HepG2 (cell line): ENCODE measurements at regions of chr21 and their contacts with region 1.

Region 1: DNA sequence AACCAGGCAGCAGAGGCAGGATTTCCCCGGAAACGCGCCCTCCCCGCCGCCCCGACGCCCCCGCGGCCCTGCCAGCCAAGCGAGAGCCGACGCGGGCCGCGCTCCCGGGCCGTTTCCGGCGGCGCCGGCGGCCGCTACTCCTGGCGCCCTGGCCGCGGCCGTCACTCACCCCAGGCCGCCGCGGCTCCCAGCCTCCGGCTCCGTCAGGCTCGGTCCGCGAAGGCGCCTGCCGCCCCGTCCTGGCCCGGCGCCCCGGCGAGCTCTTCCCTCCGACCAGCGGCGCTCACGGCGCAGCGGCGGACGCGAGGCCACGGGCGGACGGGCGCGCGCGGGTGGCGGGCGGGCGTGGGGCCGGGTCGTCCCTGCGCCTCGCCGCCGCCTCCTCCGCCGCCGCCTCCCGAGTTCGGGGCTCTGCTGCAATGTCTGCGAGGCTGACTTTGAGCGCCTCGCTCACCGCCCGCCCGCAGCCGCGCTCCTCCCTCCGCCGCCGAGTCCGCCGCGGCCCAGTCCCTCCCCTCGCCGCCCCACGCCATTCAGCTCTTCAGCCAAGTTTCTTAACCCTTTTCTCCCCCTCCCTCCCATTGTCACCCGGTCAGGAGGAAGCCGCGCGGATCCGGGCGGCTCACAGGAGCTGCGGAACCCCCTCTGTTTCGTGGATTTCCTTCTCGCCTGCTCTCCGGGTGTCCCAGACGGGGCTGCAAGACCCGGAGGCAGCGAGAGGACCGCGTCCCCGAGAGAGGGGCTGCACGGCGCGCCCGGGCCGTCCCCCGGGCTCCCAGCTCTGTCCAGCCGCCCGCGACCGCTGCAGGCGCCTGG is at the start of gene NRIP1:
- DNase-seq: peak; percentile 78
- ATAC-seq: peak; percentile 92
- H3K4me3 ChIP-seq: peak within 1 kb of the TSS; percentile 83 to 95 (median 92)
- H3K27ac ChIP-seq: peak within 1 kb of the TSS; percentile 95
- H3K4me1 ChIP-seq: peaks cover 45% of the 10 kb centered on the region
- H3K27me3 ChIP-seq: peaks cover 0 to 4% of the 10 kb centered on the region in 2 experiments; a peak in 1 of 5 replicates
- CTCF ChIP-seq: no peak
- EP300 ChIP-seq: 0 out of 4 replicates have a peak, but pooled peaks of 1 of the 2 experiments have one; percentile 11
- POLR2A ChIP-seq: peak; percentile 28 to 75; a peak in 3 of 4 replicates
- RAD21 ChIP-seq: peak; percentile 33
- total RNA-seq, gene NRIP1: 69.0 and 99.0 TPM in 2 replicates

Region 2: DNA sequence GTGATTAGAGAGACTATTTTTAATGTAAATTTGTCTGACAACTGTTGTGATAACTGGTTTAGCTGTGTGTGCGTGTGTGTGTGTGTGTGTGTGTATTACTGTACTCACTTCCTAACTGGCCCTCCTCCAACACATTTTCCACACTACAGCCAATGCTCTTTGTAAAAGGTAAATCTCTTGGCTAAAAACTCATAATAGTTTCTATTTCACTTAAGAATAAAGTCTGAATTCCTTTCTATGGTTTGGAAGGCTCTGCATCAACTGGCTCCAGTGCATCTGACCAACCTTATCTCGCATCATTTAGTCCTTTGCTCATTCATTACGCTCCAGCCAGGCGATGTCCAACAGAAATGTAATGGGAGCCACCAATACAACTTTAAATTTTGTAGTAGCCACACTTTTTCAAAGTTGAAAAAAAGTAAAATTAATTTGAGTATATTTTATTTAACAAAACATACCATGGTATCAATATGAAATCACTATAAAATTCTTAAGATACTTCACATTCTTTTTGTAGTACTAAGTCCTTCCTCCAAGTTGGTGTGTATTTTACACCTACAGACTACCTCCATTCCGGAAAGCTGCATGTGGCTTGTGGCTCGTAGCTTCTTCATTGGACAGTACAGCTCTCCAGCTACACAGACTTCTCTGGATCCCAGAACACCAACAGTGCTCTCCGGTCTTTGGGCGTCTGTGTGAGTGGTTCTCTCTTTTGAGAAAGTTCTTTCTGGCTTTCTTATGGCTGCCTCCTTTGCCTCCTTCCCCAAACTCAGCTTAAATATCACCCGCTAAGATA is 68.9 kb before region 1 on chr21:
- CTCF ChIA-PET with region 1: no interaction called
- POLR2A ChIA-PET with region 1: no interaction called
- in situ Hi-C with region 1: no loop called
- intact Hi-C with region 1: loop called (anchors 5 kb)
- DNase-seq: no peak
- ATAC-seq: peak; percentile 35; the same call in 2 of the 3 replicates
- H3K4me3 ChIP-seq: no peak overlapping the region
- H3K27ac ChIP-seq: peak overlapping the region; percentile 46
- H3K4me1 ChIP-seq: peaks cover 55% of the 10 kb centered on the region
- H3K27me3 ChIP-seq: no peaks in the 10 kb centered on the region
- CTCF ChIP-seq: no peak
- EP300 ChIP-seq: no peak
- POLR2A ChIP-seq: no peak
- RAD21 ChIP-seq: no peak

Region 3: GRCh38 chr21:15121655-15122120 is 56.9 kb after region 1 on chr21:
- CTCF ChIA-PET with region 1: no interaction called
- POLR2A ChIA-PET with region 1: interaction called, 35 read pairs
- in situ Hi-C with region 1: no loop called
- intact Hi-C with region 1: no loop called
- DNase-seq: peak; percentile 79
- ATAC-seq: peak; percentile 97
- H3K4me3 ChIP-seq: peak overlapping the region; percentile 7 to 41 (median 35); a peak in 5 of 6 replicates
- H3K27ac ChIP-seq: peak overlapping the region; percentile 68
- H3K4me1 ChIP-seq: peaks cover 26% of the 10 kb centered on the region
- H3K27me3 ChIP-seq: no peaks in the 10 kb centered on the region
- CTCF ChIP-seq: no peak
- EP300 ChIP-seq: peak in 1 of 2 experiments; percentile 86; a peak in 2 of 4 replicates
- POLR2A ChIP-seq: no peak
- RAD21 ChIP-seq: no peak

Region 4: GRCh38 chr21:15293240-15293639 is 228.5 kb after region 1 on chr21:
- CTCF ChIA-PET with region 1: no interaction called
- POLR2A ChIA-PET with region 1: no interaction called
- in situ Hi-C with region 1: no loop called
- intact Hi-C with region 1: loop called (anchors 5 kb)
- DNase-seq: peak; percentile 30
- ATAC-seq: no peak
- H3K4me3 ChIP-seq: no peak overlapping the region
- H3K27ac ChIP-seq: no peak overlapping the region
- H3K4me1 ChIP-seq: peaks cover 37% of the 10 kb centered on the region
- H3K27me3 ChIP-seq: no peaks in the 10 kb centered on the region
- CTCF ChIP-seq: no peak
- EP300 ChIP-seq: no peak
- POLR2A ChIP-seq: no peak
- RAD21 ChIP-seq: no peak

Region 5: GRCh38 chr21:15483138-15483780 is 418.5 kb after region 1 on chr21:
- CTCF ChIA-PET with region 1: no interaction called
- POLR2A ChIA-PET with region 1: interaction called, 4 read pairs
- in situ Hi-C with region 1: loop called (anchors 10 kb)
- intact Hi-C with region 1: loop called (anchors 1 kb)
- DNase-seq: peak; percentile 82
- ATAC-seq: peak; percentile 100
- H3K4me3 ChIP-seq: no peak overlapping the region
- H3K27ac ChIP-seq: no peak overlapping the region
- H3K4me1 ChIP-seq: peaks cover 25% of the 10 kb centered on the region
- H3K27me3 ChIP-seq: no peaks in the 10 kb centered on the region
- CTCF ChIP-seq: peak; percentile 97
- EP300 ChIP-seq: no peak
- POLR2A ChIP-seq: no peak
- RAD21 ChIP-seq: peak; percentile 96